ENCODE measurements at regions of chr1 and their contacts with region 1.

Region 1: DNA sequence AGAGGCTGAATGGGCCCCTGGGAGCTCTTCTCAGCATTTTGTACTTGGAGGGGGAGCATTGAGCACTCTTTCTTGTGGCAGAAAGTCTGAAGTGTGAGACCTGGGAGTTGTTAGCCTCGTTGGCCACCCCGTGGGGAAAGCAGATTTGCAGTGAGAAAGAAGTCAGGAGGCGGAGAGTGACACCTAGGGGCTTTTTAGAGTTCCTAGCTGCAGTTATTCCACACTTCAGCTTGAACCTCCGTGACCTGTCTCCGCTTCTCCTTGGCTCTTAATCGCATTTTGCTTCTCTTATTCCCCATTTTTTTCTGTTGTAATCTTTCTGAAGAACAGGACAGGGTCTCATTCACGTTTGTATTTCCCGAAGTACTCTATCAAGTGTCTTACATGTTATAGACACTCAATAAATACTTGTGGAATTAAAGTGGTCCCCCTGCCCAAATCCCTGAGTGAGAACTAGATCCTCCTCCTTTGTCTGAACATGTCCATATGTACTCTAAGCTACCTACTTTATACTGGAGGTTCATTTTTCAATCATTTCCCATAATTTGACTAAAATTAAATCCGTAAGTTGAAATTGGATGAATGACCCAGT is 14.5 kb upstream of the C1orf141 start:
- DNase-seq: peak; percentile 28
- H3K4me3 ChIP-seq: no peak overlapping the region
- CTCF ChIP-seq: peak; percentile 80

Region 2: DNA sequence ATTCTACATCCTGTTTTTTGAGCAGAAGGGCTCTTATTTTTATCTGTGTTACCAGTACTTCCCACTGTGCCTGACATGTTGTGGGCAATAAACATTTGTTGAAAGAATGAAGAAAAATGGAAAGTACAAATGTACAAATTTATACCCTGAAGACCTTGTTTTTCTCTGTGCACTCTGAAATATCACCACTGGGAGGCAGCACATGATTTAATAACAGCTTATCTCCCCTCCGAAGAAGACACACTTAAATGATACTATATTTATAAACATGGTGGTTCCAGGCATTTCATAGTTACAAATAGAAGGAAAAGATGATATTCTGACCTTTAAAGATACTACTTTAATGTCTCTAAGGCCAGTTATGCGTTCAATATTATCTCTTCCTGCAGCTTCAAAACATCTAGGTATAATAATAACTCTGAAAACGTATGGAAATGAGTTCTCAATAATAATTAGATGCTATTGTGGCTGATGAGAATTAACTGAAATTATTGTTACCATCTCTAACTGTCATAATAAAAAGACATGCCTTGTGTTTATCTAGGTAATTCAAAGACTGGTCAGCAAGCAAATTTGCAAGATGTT is 384.2 kb before region 1 on chr1:
- CTCF ChIA-PET with region 1: interaction called, 73 read pairs
- POLR2A ChIA-PET with region 1: no interaction called
- DNase-seq: peak; percentile 10
- H3K4me3 ChIP-seq: no peak overlapping the region
- CTCF ChIP-seq: peak; percentile 50

Region 3: DNA sequence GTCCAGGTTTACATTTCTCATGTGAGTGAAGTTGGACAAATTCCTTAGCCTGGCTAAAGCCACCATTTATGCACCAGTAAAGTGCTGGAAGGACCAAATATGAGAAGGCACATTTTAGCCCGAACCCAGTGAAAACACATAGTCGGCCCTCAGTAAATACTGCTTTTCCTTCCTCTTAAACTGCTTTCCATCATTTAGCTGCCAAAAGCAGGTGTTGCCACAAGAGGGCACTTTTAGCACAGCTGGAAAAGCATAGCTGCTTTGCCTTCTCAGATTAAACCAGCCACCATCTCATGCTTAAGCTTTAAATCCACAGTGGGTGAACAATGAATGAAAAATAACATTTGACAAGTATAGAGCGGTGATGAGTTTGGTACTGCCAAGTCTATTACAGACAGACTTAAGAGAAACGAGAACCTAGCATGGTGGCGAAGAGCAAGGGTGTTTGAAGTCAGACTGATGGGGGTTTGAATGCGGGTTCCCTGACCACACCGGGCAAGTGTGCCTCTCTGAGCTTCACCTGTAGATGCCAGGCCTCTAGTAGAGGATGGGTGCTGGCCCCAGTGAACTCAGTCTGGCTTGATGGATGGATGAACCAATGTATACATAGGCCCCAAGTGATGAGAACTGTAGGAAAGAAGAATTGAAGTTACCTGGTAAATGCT is 153.1 kb before region 1 on chr1:
- CTCF ChIA-PET with region 1: interaction called, 449 read pairs
- POLR2A ChIA-PET with region 1: interaction called, 3 read pairs
- DNase-seq: no peak
- H3K4me3 ChIP-seq: no peak overlapping the region
- CTCF ChIP-seq: peak; percentile 83

Region 4: GRCh38 chr1:67019600-67020136 is 129.6 kb before region 1 on chr1:
- CTCF ChIA-PET with region 1: interaction called, 11 read pairs
- POLR2A ChIA-PET with region 1: no interaction called
- DNase-seq: peak; percentile 60
- H3K4me3 ChIP-seq: no peak overlapping the region
- CTCF ChIP-seq: no peak

Region 5: GRCh38 chr1:67060811-67061218 is 88.5 kb before region 1 on chr1:
- CTCF ChIA-PET with region 1: interaction called, 15 read pairs
- POLR2A ChIA-PET with region 1: no interaction called
- DNase-seq: peak; percentile 96
- H3K4me3 ChIP-seq: no peak overlapping the region
- CTCF ChIP-seq: no peak

Region 6: GRCh38 chr1:67134695-67135094 is 14.6 kb before region 1 on chr1 and contains the start of gene C1orf141:
- CTCF ChIA-PET with region 1: interaction called, 30 read pairs
- POLR2A ChIA-PET with region 1: no interaction called
- DNase-seq: no peak
- H3K4me3 ChIP-seq: peak within 1 kb of the TSS; percentile 32
- CTCF ChIP-seq: no peak

Region 7: GRCh38 chr1:67285780-67286488 is 136.7 kb after region 1 on chr1:
- CTCF ChIA-PET with region 1: no interaction called
- POLR2A ChIA-PET with region 1: no interaction called
- DNase-seq: no peak
- H3K4me3 ChIP-seq: no peak overlapping the region
- CTCF ChIP-seq: no peak

Region 8: DNA sequence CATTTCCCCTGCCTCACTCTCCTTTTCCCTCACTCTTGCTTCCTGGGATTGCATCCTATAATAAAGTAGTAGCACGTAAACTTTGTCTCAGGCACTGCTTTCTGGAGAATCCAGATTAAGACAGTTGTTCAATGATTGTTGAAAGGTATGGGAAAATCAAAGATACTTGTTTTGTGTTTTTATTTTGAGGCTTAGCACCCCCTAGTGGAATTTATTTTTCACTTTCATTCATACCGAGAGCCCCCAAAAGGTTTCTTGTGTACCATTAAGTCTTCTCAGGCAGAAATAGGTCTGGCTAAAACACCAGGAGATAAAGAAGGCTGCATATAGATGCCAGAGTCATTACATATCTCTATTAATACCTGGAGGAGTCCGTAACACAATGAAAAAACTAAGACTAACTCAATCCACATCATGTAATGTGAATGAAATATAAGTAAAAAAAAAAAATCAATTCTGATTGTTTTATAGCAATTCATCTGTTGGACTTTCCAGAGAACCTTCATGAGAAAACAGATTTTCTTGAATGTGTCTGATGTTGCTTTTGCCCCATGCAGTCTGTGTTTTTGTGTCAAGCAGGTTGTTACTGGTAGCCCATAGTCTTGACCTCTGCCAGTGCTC is 1197.0 kb after region 1 on chr1:
- CTCF ChIA-PET with region 1: no interaction called
- POLR2A ChIA-PET with region 1: no interaction called
- DNase-seq: no peak
- H3K4me3 ChIP-seq: no peak overlapping the region
- CTCF ChIP-seq: peak; percentile 10

Measured in AG04449 (cell line).